Activated T-helper 1 cell treated with anti-CD3 and anti-CD28 coated beads, Interleukin-12 subunit alpha, Interleukin-12 subunit beta, Interleukin-2, Interleukin-4 antibody, amounts not matched to agents 30 ng/mL and 10 ng/mL and 1 ng/mL, durations not matched to agents 14 hours and 24 hours and 36 hours (primary cell): ENCODE measurements at regions of chr12 and their contacts with region 1.

Region 1: GRCh38 chr12:10304161-10304574 is 3.5 kb upstream of the KLRD1 start:
- DNase-seq: peak; percentile 34
- H3K4me3 Mint-ChIP-seq: no peak overlapping the region
- H3K27ac Mint-ChIP-seq: peak overlapping the region; percentile 54
- H3K4me1 Mint-ChIP-seq: peaks cover 51% of the 10 kb centered on the region
- H3K27me3 Mint-ChIP-seq: peaks cover 7% of the 10 kb centered on the region

Region 2: DNA sequence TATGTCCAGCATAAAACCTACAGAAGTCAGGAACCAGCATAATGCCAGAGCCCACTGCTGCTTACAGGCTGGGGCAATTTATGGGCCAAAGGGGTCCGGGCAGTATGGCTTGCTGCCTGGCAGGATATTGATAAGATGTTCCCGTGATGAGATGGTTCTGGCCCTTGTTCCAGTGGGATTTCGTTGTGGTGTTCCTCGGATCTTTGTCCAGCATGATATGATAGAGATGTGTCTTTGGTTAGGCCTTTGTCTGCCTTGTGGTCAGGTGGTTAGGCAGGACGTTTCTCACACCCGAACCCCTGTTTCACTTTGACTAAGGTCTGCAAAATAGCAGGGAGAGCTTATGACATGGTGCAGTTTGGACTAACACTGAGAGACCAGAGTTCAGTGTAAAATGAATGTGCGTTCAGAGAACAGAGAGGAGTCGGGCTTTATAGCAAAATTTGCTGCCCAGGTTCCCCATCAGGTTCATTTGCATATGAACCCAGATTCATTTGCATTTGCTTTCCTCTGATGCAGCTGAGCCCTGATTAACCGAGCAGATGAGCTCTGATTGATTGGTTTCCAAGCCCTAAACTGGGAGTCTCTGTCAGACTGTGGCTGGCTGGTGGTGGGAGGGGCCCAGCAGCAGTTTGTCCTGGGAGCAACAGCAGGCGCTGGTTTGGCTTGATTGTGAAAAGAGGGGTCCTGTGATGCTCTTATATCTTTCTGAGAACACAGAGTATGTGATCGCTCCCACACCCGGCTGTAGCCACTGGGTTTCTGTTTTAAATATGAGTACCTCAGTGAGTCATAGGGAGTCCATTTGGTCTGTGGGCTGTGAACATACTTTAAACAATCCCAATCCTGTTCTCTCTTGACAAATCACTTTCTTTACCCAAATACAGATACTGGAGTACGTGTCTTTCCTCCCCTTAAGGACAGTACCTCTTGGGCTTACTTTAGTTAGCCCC is 939.7 kb before region 1 on chr12:
- intact Hi-C with region 1: loop called (anchors 10 kb)
- DNase-seq: peak; percentile 47
- H3K4me3 Mint-ChIP-seq: peak overlapping the region; percentile 52
- H3K27ac Mint-ChIP-seq: peak overlapping the region; percentile 69
- H3K4me1 Mint-ChIP-seq: peaks cover 55% of the 10 kb centered on the region
- H3K27me3 Mint-ChIP-seq: peaks cover 27% of the 10 kb centered on the region

Region 3: DNA sequence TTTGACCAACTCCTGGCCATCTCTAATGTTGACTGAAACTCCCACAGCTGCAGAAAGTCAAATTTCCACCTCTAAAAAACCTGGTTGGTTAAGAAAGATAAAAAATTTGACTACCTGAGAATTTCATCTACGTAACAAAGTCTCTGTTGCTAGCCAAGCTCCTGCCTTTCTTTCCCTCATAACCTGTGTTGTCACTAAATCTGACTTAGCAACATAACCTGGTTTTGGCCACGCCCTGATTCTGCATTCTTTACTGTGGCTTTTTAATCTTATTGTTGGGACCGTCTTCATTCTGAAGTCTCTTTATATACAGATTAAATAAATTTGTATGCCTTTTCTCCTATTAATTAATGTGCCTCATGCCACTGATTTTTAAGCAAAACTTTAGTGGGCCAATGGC is 527.4 kb before region 1 on chr12:
- intact Hi-C with region 1: no loop called
- DNase-seq: no peak
- H3K4me3 Mint-ChIP-seq: no peak overlapping the region
- H3K27ac Mint-ChIP-seq: no peak overlapping the region
- H3K4me1 Mint-ChIP-seq: peaks cover 70% of the 10 kb centered on the region
- H3K27me3 Mint-ChIP-seq: no peaks in the 10 kb centered on the region

Region 4: DNA sequence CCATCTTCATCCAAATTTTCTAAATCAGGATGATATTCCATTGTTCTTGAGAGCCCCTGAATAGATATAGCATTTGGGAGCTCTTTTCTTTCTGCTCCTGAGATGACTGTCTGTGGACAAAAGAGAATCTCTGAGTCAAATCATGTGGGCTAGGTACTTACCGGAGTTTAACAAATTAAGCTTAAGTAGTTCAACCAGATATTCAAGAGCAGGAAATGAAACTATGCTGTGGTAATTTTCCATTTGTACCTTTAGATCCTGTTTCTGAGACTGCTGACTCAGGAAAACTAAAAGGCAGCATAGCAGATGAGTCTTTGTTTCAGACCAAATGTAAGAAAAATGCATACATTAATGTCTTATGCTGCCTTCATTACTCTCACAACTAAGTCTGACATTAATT is 174.1 kb before region 1 on chr12 and contains the start of gene CLEC7A:
- intact Hi-C with region 1: loop called (anchors 1 kb)
- DNase-seq: no peak
- H3K4me3 Mint-ChIP-seq: no peak within 1 kb of the TSS
- H3K27ac Mint-ChIP-seq: no peak within 1 kb of the TSS
- H3K4me1 Mint-ChIP-seq: peaks cover 16% of the 10 kb centered on the region
- H3K27me3 Mint-ChIP-seq: peaks cover 37% of the 10 kb centered on the region
- total RNA-seq, gene CLEC7A: 0.17 TPM in 1 of 2 replicates, not detected in the other

Region 5: GRCh38 chr12:10196210-10196609 is 108.0 kb before region 1 on chr12:
- intact Hi-C with region 1: no loop called
- DNase-seq: no peak
- H3K4me3 Mint-ChIP-seq: no peak overlapping the region
- H3K27ac Mint-ChIP-seq: no peak overlapping the region
- H3K4me1 Mint-ChIP-seq: no peaks in the 10 kb centered on the region
- H3K27me3 Mint-ChIP-seq: peaks cover 21% of the 10 kb centered on the region

Region 6: DNA sequence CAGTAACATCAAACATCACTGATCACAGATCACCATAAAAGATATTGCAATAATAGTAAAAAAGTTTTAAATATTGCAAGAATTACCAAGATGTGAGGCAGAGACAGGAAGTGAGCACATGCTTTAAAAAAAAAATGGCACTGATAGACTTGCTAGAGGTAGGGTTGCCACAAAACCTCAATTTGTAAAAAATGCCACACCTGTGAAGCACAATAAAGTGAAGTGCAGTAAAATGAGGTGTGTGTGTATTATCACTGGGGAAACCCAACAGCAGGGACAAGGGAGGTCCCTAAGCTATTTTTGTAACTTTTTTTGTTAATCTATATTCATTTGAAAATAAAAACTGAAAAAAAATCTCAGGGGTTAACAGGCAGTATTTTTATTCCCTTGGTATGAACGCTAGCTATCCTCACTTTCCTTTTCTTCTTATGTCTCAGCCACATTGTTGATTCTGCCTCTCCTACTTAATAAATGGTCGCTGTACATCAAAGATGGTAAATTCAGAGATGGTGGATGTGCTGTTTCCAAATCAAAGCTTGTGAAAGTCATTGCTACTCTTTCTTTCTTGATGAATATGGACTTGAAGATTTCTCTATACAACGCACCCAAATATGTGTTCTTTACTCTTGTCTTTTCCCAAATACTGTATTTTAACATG is 10.5 kb before region 1 on chr12:
- intact Hi-C with region 1: loop called (anchors 1 kb)
- DNase-seq: no peak
- H3K4me3 Mint-ChIP-seq: no peak overlapping the region
- H3K27ac Mint-ChIP-seq: no peak overlapping the region
- H3K4me1 Mint-ChIP-seq: peaks cover 31% of the 10 kb centered on the region
- H3K27me3 Mint-ChIP-seq: peaks cover 11% of the 10 kb centered on the region

Region 7: DNA sequence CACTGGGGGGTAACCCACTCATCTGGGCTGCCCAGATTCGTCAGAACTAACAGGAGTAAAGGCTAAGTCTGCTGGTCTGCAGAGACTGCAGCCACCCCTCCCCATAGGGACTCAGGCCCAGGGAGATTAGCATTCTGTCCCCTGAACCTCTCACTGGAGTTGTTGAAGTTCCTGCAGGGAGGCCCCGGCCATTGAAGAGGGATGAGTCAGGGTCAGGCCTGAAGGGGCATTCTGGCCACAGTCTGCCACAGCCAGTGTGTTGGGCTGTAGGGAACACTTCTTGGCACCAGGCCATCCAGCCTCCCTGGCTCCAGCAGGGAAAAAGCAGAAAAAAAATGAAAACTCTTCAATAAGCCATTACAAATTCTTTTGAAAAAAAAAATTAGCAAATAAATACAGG is 50.3 kb after region 1 on chr12:
- intact Hi-C with region 1: no loop called
- DNase-seq: no peak
- H3K4me3 Mint-ChIP-seq: no peak overlapping the region
- H3K27ac Mint-ChIP-seq: no peak overlapping the region
- H3K4me1 Mint-ChIP-seq: no peaks in the 10 kb centered on the region
- H3K27me3 Mint-ChIP-seq: peaks cover 30% of the 10 kb centered on the region

Region 8: DNA sequence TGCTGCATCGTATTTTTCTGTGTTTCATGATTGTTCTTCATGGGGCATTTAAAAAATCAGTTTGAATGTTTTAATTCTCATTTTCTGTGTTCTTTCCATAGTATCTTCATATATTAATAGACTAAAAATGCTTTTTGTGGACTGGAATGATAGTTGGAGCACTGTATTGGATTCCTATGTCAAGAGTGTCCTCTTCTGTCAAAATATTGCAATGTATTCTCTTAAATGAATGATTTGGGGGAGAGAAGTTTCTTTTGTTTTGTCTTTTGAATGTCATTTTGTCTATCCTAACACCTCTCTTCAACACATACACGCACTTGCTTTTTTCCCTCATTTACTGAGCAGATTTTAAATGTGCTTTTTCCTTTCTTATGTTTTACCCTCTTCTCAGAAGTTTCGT is 196.9 kb after region 1 on chr12:
- intact Hi-C with region 1: loop called (anchors 1 kb)
- DNase-seq: no peak
- H3K4me3 Mint-ChIP-seq: no peak overlapping the region
- H3K27ac Mint-ChIP-seq: no peak overlapping the region
- H3K4me1 Mint-ChIP-seq: peaks cover 8% of the 10 kb centered on the region
- H3K27me3 Mint-ChIP-seq: peaks cover 11% of the 10 kb centered on the region

Region 9: DNA sequence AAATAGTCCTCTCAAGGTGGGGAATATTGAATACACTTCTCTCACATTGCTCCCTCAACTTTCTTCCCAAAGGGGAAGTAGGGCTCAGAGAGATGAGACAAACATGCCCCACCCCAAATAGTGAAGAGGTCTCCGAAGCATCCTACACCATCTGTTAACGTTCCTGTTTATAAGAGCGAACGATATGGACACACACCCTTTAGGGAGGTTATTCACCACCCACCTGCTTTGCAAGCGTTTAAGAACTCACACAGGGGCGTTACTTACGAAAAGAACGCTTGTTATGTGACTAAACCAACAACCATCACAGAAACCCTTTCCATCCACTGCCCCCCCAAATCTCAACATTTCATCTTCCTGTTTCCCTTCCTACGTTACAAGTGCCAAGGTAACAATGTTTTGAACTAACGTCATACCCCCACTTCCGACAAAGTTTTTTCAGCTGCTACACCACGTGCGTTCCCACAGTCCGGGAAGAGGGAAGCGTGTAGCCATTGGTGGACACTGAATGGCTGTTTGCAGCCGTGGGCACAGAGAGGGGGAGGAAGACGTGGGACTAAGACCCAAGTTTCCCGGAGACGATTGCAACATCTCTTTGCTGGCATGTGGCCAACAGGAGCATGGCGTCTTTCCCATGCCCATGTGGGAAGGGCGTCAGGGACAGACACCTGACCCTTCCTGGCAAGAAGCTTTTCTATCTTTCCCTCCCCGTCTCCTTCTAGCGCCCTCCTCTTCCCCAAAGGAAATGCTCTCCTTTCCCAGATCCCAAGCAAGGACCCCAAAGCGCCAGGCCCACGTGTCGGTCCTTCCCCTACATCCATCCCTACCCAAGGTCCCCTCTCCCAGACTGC is 417.7 kb after region 1 on chr12:
- intact Hi-C with region 1: loop called (anchors 5 kb)
- DNase-seq: peak; percentile 53
- H3K4me3 Mint-ChIP-seq: peak overlapping the region; percentile 96
- H3K27ac Mint-ChIP-seq: peak overlapping the region; percentile 96
- H3K4me1 Mint-ChIP-seq: peaks cover 60% of the 10 kb centered on the region
- H3K27me3 Mint-ChIP-seq: peaks cover 34% of the 10 kb centered on the region